BJ (cell line): ENCODE measurements at regions of chr17 and their contacts with region 1.

Region 1: DNA sequence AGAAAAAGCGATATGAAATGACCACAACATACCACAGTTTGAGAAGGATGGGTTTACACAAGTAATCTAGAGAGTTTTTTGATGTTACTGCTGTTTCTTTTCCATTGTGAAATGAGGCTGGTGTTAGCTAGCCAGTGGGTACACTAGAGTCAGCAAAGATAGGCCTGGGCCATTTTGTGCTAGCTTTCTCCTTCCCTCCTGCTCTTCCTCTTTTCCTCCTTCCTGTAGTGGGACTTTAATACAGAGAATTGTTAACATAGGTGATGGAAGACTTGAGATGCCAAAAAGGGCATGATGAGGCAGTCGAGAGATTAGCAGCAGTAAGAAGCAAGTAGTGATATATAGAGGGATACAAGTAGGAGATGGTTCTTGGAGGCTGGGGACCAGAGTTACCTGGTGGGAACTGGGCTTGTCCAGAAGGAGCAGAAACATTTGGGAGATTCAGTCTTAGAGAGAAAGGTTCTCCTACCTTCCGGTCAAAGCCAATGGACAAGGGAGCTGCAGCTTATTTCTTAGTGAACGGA is 7.7 kb downstream of the NSRP1 start:
- DNase-seq: no peak
- H3K4me3 ChIP-seq: no peak overlapping the region
- H3K27me3 ChIP-seq: no peaks in the 10 kb centered on the region
- CTCF ChIP-seq: no peak

Region 2: GRCh38 chr17:30068465-30068864 is 55.9 kb before region 1 on chr17:
- CTCF ChIA-PET with region 1: no interaction called
- POLR2A ChIA-PET with region 1: no interaction called
- DNase-seq: no peak
- H3K4me3 ChIP-seq: no peak overlapping the region
- H3K27me3 ChIP-seq: 0 out of 2 replicates have a peak, but pooled peaks cover 1% of the 10 kb centered on the region
- CTCF ChIP-seq: no peak

Region 3: DNA sequence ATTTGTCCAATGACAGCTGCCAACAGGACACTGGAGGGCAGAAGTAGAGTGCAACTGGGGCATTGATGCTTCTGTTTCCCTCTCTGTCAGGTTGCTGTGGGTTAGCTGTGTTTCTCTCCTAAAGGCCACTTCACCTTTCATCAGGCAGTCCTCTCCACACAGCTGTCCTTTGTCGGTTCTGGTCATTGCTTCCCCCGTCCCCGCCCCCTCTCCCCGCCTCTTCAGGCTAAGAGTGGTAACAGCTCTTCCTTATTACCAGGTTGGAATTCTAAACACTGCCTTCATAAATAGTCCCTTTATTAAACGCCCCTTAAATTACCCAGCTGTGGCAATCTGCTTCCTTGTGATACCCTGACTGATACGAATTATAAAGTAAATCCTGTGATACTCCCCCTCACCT is 39.5 kb before region 1 on chr17:
- CTCF ChIA-PET with region 1: no interaction called
- POLR2A ChIA-PET with region 1: no interaction called
- DNase-seq: no peak
- H3K4me3 ChIP-seq: no peak overlapping the region
- H3K27me3 ChIP-seq: peaks cover 4% of the 10 kb centered on the region
- CTCF ChIP-seq: no peak

Region 4: GRCh38 chr17:30113213-30113612 is 11.1 kb before region 1 on chr17:
- CTCF ChIA-PET with region 1: interaction called, 28 read pairs
- POLR2A ChIA-PET with region 1: no interaction called
- DNase-seq: no peak
- H3K4me3 ChIP-seq: no peak overlapping the region
- H3K27me3 ChIP-seq: no peaks in the 10 kb centered on the region
- CTCF ChIP-seq: no peak

Region 5: GRCh38 chr17:30134551-30134950 is 10.2 kb after region 1 on chr17:
- CTCF ChIA-PET with region 1: interaction called, 10 read pairs
- POLR2A ChIA-PET with region 1: no interaction called
- DNase-seq: no peak
- H3K4me3 ChIP-seq: no peak overlapping the region
- H3K27me3 ChIP-seq: no peaks in the 10 kb centered on the region
- CTCF ChIP-seq: no peak

Region 6: DNA sequence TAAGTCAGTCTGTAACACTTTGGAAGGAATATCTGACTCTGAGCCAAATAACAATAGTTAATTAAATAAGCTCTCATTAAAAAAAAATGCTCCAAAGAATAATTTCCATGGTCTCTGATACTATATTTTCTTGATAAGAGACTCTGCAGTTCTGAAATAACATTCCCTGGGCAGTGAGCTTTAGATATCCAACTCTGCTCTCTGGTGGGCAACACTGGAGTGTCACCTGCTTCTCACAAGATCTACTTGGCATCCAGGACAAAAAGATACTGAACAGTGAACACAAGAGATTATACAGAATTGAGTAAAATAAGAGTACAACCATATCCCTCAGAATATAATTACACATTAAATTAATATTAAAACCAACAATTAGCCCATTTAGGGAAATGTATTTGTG is 153.7 kb after region 1 on chr17:
- CTCF ChIA-PET with region 1: interaction called, 31 read pairs
- POLR2A ChIA-PET with region 1: no interaction called
- DNase-seq: no peak
- H3K4me3 ChIP-seq: no peak overlapping the region
- H3K27me3 ChIP-seq: no peaks in the 10 kb centered on the region
- CTCF ChIP-seq: peak; percentile 41

Region 7: DNA sequence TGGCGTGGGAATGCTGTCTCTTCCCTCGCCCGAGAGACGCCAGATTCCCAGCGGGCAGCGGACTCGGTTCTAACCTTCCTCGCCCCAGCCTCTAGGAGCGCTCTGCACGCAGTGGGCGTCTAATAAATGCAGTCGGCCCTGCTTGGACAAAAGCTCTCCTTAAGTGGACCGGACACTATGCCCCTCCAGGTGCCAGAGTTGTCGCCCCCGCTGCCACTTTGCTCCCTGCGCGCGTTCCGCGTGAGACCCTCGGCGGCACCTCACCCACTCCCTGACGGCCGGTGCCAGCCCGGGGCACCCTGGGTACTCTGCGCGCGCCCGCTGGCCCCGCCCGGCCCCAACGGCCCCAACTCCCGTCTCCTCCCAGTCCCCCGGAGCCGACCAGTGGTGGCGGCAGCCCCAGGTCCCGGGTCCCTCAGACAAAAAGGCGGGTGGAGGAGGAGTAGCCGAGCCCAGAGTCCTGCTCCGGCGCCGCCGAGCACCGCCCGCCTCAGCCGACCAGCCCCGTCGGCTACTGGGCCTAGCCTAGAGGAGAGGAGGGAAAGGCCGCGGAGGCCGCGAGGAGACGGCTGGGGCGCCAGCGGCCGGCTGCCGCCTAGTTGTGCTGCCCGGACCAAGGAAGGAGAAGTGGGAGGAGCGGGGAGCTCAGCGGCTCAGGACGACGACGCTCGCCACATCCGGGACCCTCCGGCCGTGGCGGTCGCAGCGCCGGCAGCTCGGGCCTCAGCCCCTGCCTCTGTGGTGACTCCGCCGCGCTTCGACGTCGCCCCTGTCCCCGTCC is 475.9 kb after region 1 on chr17:
- CTCF ChIA-PET with region 1: no interaction called
- POLR2A ChIA-PET with region 1: no interaction called
- DNase-seq: no peak
- H3K4me3 ChIP-seq: peak overlapping the region; percentile 77
- H3K27me3 ChIP-seq: no peaks in the 10 kb centered on the region
- CTCF ChIP-seq: peak; percentile 78